CD4-positive, alpha-beta T cell (primary cell): ENCODE measurements at regions of chr6 and their contacts with region 1.

Region 1: GRCh38 chr6:25070547-25071366 is 135.0 kb upstream of the RIPOR2 start:
- DNase-seq: peak; percentile 71 to 93 (median 76)
- ATAC-seq: peak; percentile 99
- H3K4me3 ChIP-seq: no peak overlapping the region
- H3K4me3 Mint-ChIP-seq: peak overlapping the region; percentile 14
- H3K27ac ChIP-seq: no peak overlapping the region
- H3K27ac Mint-ChIP-seq: peak overlapping the region; percentile 75
- H3K4me1 ChIP-seq: peaks cover 4% of the 10 kb centered on the region
- H3K4me1 Mint-ChIP-seq: peaks cover 10% of the 10 kb centered on the region
- H3K27me3 ChIP-seq: no peaks in the 10 kb centered on the region
- H3K27me3 Mint-ChIP-seq: no peaks in the 10 kb centered on the region
- CTCF ChIP-seq: peak; percentile 98

Region 2: GRCh38 chr6:24709014-24709711 is 361.6 kb before region 1 on chr6:
- CTCF ChIA-PET with region 1: no interaction called
- POLR2A ChIA-PET with region 1: no interaction called
- intact Hi-C with region 1: loop called in 1 of 2 experiments (anchors 5 kb)
- DNase-seq: no peak
- ATAC-seq: no peak
- H3K4me3 ChIP-seq: no peak overlapping the region
- H3K4me3 Mint-ChIP-seq: no peak overlapping the region
- H3K27ac ChIP-seq: no peak overlapping the region
- H3K27ac Mint-ChIP-seq: peak overlapping the region; percentile 30
- H3K4me1 ChIP-seq: peaks cover 17% of the 10 kb centered on the region
- H3K4me1 Mint-ChIP-seq: peaks cover 75% of the 10 kb centered on the region
- H3K27me3 ChIP-seq: no peaks in the 10 kb centered on the region
- H3K27me3 Mint-ChIP-seq: no peaks in the 10 kb centered on the region
- CTCF ChIP-seq: no peak

Region 3: GRCh38 chr6:24855395-24856245 is 215.1 kb before region 1 on chr6:
- CTCF ChIA-PET with region 1: interaction called, 18 read pairs
- POLR2A ChIA-PET with region 1: interaction called, 3 read pairs
- intact Hi-C with region 1: loop called (anchors 2 kb)
- DNase-seq: peak; percentile 49 to 90 (median 61)
- ATAC-seq: peak; percentile 66
- H3K4me3 ChIP-seq: no peak overlapping the region
- H3K4me3 Mint-ChIP-seq: peak overlapping the region; percentile 17
- H3K27ac ChIP-seq: peak overlapping the region; percentile 35 to 61
- H3K27ac Mint-ChIP-seq: peak overlapping the region; percentile 93
- H3K4me1 ChIP-seq: peaks cover 51% of the 10 kb centered on the region
- H3K4me1 Mint-ChIP-seq: peaks cover 67% of the 10 kb centered on the region
- H3K27me3 ChIP-seq: no peaks in the 10 kb centered on the region
- H3K27me3 Mint-ChIP-seq: no peaks in the 10 kb centered on the region
- CTCF ChIP-seq: peak; percentile 79

Region 4: DNA sequence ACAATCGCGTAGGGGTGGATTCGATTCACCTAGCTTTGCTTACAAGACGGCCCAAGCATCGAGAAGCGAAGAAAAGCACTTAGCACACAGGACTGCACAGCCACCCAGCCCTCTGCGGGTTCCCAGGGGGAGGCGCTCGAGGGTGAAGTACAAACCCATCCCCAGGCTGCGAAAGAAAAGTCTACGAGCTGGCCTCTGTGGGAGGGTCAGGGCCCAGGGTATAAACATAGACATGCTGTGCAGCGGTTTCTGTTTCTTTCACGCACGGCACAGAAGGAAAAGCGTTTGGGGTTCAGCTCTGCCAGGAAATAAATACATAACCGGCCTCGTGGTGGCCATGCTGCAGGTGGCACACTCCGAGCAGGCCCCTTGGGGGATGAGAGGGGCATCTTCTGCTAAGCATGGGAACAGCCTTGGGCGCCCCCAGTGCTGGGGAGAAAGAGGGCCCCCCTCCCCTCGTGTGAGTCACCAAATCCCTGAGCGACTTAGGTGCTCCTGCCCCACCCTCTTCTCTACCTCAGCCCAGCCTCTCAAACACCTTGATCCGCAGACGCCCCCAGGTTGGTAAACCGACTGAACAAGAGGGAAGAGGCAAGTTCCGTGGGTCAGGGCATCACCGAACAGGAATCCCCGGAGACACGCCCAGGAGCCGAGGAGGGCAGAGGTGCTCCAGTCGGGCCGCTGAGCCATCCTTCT is 43.4 kb before region 1 on chr6:
- CTCF ChIA-PET with region 1: interaction called, 75 read pairs
- POLR2A ChIA-PET with region 1: interaction called, 33 read pairs
- intact Hi-C with region 1: loop called (anchors 1 kb)
- DNase-seq: peak; percentile 64 to 93 (median 76)
- ATAC-seq: peak; percentile 93
- H3K4me3 ChIP-seq: peak overlapping the region; percentile 47
- H3K4me3 Mint-ChIP-seq: peak overlapping the region; percentile 70
- H3K27ac ChIP-seq: peak overlapping the region; percentile 60 to 62
- H3K27ac Mint-ChIP-seq: peak overlapping the region; percentile 91
- H3K4me1 ChIP-seq: peaks cover 37% of the 10 kb centered on the region
- H3K4me1 Mint-ChIP-seq: peaks cover 59% of the 10 kb centered on the region
- H3K27me3 ChIP-seq: no peaks in the 10 kb centered on the region
- H3K27me3 Mint-ChIP-seq: no peaks in the 10 kb centered on the region
- CTCF ChIP-seq: peak; percentile 41

Region 5: DNA sequence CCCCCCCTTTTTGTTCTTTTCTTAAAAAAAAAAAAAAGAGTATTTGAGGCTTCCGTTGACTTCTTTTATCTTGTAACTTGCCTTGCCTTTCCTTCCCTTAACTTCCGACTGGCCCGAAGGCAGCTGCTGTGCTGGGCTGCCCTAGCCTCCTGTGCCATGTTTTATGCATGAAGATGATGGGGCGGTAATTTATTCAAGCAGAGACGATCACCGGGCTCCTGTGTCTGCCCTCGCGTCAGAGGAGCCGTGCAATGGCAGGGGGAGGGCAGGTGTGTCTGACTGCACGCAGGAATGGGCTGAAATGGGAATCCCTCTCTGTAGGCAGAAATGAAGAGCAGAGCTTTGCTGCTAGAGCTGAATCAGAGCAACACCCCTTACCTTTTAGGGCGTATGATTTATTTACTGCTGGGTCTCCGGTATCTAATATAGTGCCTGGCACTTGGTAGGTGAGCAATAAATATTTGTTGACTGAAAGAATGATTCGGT is 28.7 kb before region 1 on chr6:
- CTCF ChIA-PET with region 1: interaction called, 17 read pairs
- POLR2A ChIA-PET with region 1: interaction called, 5 read pairs
- intact Hi-C with region 1: loop called (anchors 1 to 2 kb)
- DNase-seq: peak in 13 of 14 experiments; percentile 27 to 85 (median 55)
- ATAC-seq: peak; percentile 73
- H3K4me3 ChIP-seq: peak overlapping the region; percentile 71
- H3K4me3 Mint-ChIP-seq: peak overlapping the region; percentile 92
- H3K27ac ChIP-seq: peak overlapping the region; percentile 76 to 83
- H3K27ac Mint-ChIP-seq: peak overlapping the region; percentile 96
- H3K4me1 ChIP-seq: peaks cover 50% of the 10 kb centered on the region
- H3K4me1 Mint-ChIP-seq: peaks cover 56% of the 10 kb centered on the region
- H3K27me3 ChIP-seq: no peaks in the 10 kb centered on the region
- H3K27me3 Mint-ChIP-seq: no peaks in the 10 kb centered on the region
- CTCF ChIP-seq: no peak